Calu3 (cell line): ENCODE measurements at regions of chr22 and their contacts with region 1.

Region 1: GRCh38 chr22:30634471-30635233 is 929 bp upstream of the SLC35E4 start:
- DNase-seq: peak; percentile 88
- H3K4me3 Mint-ChIP-seq: peak overlapping the region; percentile 75
- H3K27ac Mint-ChIP-seq: peak overlapping the region; percentile 44
- H3K4me1 Mint-ChIP-seq: peaks cover 8% of the 10 kb centered on the region
- H3K27me3 Mint-ChIP-seq: no peaks in the 10 kb centered on the region
- CTCF ChIP-seq: peak; percentile 94

Region 2: DNA sequence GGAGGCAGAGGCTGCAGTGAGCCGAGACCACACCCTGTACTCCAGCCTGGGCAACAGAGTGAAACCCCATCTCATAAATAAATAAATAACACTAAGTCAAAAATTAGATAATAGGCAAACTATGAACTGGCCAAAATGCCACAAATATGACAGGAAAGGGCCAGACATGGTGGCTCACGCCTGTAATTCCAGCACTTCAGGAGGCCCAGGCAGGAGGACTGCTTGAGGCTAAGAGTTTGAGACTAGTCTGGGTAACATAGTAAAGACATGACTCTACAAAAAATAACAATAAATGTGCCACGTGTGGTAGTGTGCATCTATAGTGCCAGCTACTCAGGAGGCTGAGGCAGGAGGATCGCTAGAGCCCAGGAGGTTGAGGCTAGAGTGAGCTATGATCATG is 108.0 kb before region 1 on chr22:
- CTCF ChIA-PET with region 1: no interaction called
- intact Hi-C with region 1: no loop called
- DNase-seq: no peak
- H3K4me3 Mint-ChIP-seq: no peak overlapping the region
- H3K27ac Mint-ChIP-seq: no peak overlapping the region
- H3K4me1 Mint-ChIP-seq: no peaks in the 10 kb centered on the region
- H3K27me3 Mint-ChIP-seq: peaks cover 27% of the 10 kb centered on the region
- CTCF ChIP-seq: no peak

Region 3: GRCh38 chr22:30606455-30607299 is 28.0 kb before region 1 on chr22 and contains the start of gene TCN2:
- CTCF ChIA-PET with region 1: interaction called, 12 read pairs
- intact Hi-C with region 1: no loop called
- DNase-seq: peak; percentile 68
- H3K4me3 Mint-ChIP-seq: peak within 1 kb of the TSS; percentile 79
- H3K27ac Mint-ChIP-seq: peak within 1 kb of the TSS; percentile 82
- H3K4me1 Mint-ChIP-seq: peaks cover 38% of the 10 kb centered on the region
- H3K27me3 Mint-ChIP-seq: no peaks in the 10 kb centered on the region
- CTCF ChIP-seq: no peak
- total RNA-seq, gene TCN2: 11.0 and 25.9 TPM in 2 replicates

Region 4: DNA sequence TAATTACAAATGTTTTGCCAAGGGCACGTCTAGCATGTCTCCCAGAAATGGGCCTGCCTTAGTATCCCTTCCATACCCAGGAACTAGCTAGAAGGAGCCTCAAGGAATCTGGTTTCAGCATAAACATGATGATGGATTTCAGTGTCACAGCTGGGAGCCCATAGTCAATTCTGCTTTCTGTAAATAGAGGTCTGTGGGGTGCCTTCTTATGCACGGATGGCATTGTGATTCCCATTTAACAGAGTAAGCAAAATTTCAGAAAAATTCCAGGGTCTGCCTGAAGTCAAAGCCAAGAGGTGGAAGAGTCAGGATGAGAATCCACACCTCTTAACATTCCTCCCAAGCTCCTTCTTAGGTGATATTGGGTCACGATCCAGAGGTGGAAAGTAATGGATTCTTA is 20.9 kb after region 1 on chr22:
- CTCF ChIA-PET with region 1: no interaction called
- intact Hi-C with region 1: no loop called
- DNase-seq: no peak
- H3K4me3 Mint-ChIP-seq: no peak overlapping the region
- H3K27ac Mint-ChIP-seq: no peak overlapping the region
- H3K4me1 Mint-ChIP-seq: no peaks in the 10 kb centered on the region
- H3K27me3 Mint-ChIP-seq: no peaks in the 10 kb centered on the region
- CTCF ChIP-seq: no peak

Region 5: GRCh38 chr22:30754971-30755756 is 120.5 kb after region 1 on chr22:
- CTCF ChIA-PET with region 1: interaction called, 83 read pairs
- intact Hi-C with region 1: loop called (anchors 1 kb)
- DNase-seq: peak; percentile 68
- H3K4me3 Mint-ChIP-seq: no peak overlapping the region
- H3K27ac Mint-ChIP-seq: no peak overlapping the region
- H3K4me1 Mint-ChIP-seq: no peaks in the 10 kb centered on the region
- H3K27me3 Mint-ChIP-seq: no peaks in the 10 kb centered on the region
- CTCF ChIP-seq: peak; percentile 64

Region 6: GRCh38 chr22:30927806-30928205 is 293.2 kb after region 1 on chr22:
- CTCF ChIA-PET with region 1: interaction called, 11 read pairs
- intact Hi-C with region 1: no loop called
- DNase-seq: no peak
- H3K4me3 Mint-ChIP-seq: no peak overlapping the region
- H3K27ac Mint-ChIP-seq: no peak overlapping the region
- H3K4me1 Mint-ChIP-seq: no peaks in the 10 kb centered on the region
- H3K27me3 Mint-ChIP-seq: no peaks in the 10 kb centered on the region
- CTCF ChIP-seq: no peak